Activated T-helper 1 cell treated with anti-CD3 and anti-CD28 coated beads, Interleukin-12 subunit alpha, Interleukin-12 subunit beta, Interleukin-2, Interleukin-4 antibody, amounts not matched to agents 30 ng/mL and 10 ng/mL and 1 ng/mL, durations not matched to agents 14 hours and 24 hours and 36 hours (primary cell): ENCODE measurements at regions of chr17 and their contacts with region 1.

Region 1: DNA sequence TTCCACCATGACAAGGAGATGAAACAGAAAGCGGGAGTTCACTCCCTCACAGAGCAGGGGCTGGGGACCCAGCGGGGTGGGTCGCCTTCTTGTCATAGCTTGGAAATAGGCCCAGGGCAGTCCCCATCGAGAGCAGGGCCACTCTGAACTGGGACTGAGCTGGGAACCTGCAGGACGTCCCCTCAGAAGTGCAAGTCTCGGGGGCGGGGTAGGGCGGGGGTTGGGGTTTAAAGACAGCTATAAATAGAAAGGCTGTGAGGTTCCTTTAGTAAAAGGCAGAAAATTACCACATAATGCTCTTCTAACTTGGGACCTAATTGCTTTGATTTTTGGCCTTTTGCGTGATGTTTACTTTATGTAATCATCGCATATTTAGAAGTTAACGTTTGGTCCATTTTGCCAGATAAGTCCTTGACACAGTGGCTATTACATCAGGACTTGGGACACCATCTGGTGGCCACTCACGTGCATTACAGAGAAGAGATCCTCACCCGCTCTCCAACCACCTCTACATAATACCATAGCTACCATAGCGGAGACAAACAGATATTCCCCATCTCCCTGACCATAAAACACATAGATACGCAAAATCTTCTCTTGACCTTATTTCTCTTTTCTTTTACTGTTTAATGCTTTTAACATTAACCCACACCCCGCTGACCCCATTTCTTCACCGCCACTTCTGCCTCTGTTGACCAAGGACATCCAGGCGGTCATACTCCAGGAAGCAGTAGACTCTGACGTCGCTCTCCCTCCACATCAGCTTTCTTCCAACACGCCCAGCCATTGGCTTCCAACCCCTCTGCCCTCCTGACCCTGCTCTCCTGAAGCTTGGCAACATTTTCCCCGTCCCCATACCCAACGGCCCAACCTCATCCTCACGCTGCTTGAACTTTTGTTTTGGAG is 27.5 kb upstream of the PIK3R6 start:
- DNase-seq: no peak
- H3K4me3 Mint-ChIP-seq: peak overlapping the region; percentile 52
- H3K27ac Mint-ChIP-seq: peak overlapping the region; percentile 72
- H3K4me1 Mint-ChIP-seq: peaks cover 72% of the 10 kb centered on the region
- H3K27me3 Mint-ChIP-seq: no peaks in the 10 kb centered on the region

Region 2: GRCh38 chr17:8745586-8746500 is 149.1 kb before region 1 on chr17:
- intact Hi-C with region 1: loop called (anchors 2 kb)
- DNase-seq: peak; percentile 63
- H3K4me3 Mint-ChIP-seq: peak overlapping the region; percentile 87
- H3K27ac Mint-ChIP-seq: peak overlapping the region; percentile 75
- H3K4me1 Mint-ChIP-seq: peaks cover 13% of the 10 kb centered on the region
- H3K27me3 Mint-ChIP-seq: peaks cover 6% of the 10 kb centered on the region

Region 3: GRCh38 chr17:8857919-8858318 is 37.0 kb before region 1 on chr17:
- intact Hi-C with region 1: loop called (anchors 2 kb)
- DNase-seq: peak; percentile 44
- H3K4me3 Mint-ChIP-seq: peak overlapping the region; percentile 73
- H3K27ac Mint-ChIP-seq: peak overlapping the region; percentile 94
- H3K4me1 Mint-ChIP-seq: peaks cover 60% of the 10 kb centered on the region
- H3K27me3 Mint-ChIP-seq: no peaks in the 10 kb centered on the region

Region 4: GRCh38 chr17:8905331-8905730 is 10.4 kb after region 1 on chr17:
- intact Hi-C with region 1: no loop called
- DNase-seq: no peak
- H3K4me3 Mint-ChIP-seq: no peak overlapping the region
- H3K27ac Mint-ChIP-seq: no peak overlapping the region
- H3K4me1 Mint-ChIP-seq: peaks cover 26% of the 10 kb centered on the region
- H3K27me3 Mint-ChIP-seq: no peaks in the 10 kb centered on the region

Region 5: DNA sequence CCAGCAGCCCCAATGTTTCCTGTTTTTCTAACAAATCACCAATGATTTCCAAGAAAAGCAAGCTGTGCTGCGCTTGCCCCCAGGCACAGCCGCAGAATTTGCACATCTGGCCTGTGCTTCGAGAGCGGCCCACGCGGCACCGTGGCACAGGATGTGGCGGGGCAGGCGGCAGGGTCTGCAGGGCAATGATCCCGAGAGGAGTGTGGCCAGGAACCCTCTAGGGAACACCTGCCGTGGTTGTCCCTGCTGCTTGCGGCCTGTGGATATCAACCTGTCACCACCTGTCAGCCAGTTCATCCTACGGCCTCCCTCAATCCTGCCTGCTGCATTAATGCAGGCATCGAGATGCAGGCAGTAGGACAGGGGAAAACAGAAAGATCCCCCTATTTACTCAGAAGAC is 46.6 kb after region 1 on chr17:
- intact Hi-C with region 1: loop called (anchors 1 kb)
- DNase-seq: peak; percentile 68
- H3K4me3 Mint-ChIP-seq: peak overlapping the region; percentile 67
- H3K27ac Mint-ChIP-seq: peak overlapping the region; percentile 97
- H3K4me1 Mint-ChIP-seq: peaks cover 60% of the 10 kb centered on the region
- H3K27me3 Mint-ChIP-seq: no peaks in the 10 kb centered on the region

Region 6: DNA sequence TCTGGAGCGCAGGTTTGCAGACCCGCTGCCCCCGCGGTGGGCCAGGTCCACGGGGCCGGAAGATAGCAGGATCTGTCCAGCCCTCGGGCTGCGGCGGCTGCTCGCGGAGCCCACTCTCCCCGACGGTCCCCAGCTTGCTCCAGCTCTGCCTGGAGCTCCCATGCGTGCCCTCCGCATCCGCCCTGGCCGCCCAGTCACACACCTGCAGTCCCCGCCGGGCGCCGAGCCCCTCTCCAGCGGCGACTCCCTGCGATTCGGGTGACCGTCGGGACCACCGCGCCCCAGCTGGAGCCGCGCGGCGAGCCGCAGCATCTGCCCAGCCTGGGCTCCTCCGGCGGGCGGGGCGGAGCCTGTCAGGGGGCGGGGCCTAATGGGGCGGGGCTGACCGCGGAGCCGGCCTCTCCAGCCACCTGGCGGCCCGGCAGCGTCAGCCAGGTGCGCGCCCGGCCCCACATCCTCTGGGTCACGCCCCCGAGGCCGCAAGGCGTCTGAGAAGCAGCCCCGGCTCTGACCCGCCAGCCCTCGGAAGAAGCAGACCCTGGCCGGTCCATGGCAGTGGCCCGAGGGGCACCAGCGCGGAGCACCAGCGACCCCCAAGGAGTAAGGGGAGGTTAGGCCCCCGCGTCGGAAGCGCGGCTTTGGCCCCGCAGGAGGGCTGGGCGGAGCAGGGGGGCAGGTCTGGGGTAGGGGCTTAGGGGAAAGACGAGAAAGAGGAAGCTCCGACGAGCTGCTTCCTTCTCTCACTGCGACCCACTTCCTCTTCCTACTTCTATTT is 70.7 kb after region 1 on chr17 and contains the start of gene PIK3R5:
- intact Hi-C with region 1: loop called (anchors 2 kb)
- DNase-seq: peak; percentile 62
- H3K4me3 Mint-ChIP-seq: peak within 1 kb of the TSS; percentile 98
- H3K27ac Mint-ChIP-seq: peak within 1 kb of the TSS; percentile 96
- H3K4me1 Mint-ChIP-seq: peaks cover 52% of the 10 kb centered on the region
- H3K27me3 Mint-ChIP-seq: no peaks in the 10 kb centered on the region
- total RNA-seq, gene PIK3R5: 30.5 and 33.6 TPM in 2 replicates